Calu3 (cell line): ENCODE measurements at regions of chr4 and their contacts with region 1.

Region 1: DNA sequence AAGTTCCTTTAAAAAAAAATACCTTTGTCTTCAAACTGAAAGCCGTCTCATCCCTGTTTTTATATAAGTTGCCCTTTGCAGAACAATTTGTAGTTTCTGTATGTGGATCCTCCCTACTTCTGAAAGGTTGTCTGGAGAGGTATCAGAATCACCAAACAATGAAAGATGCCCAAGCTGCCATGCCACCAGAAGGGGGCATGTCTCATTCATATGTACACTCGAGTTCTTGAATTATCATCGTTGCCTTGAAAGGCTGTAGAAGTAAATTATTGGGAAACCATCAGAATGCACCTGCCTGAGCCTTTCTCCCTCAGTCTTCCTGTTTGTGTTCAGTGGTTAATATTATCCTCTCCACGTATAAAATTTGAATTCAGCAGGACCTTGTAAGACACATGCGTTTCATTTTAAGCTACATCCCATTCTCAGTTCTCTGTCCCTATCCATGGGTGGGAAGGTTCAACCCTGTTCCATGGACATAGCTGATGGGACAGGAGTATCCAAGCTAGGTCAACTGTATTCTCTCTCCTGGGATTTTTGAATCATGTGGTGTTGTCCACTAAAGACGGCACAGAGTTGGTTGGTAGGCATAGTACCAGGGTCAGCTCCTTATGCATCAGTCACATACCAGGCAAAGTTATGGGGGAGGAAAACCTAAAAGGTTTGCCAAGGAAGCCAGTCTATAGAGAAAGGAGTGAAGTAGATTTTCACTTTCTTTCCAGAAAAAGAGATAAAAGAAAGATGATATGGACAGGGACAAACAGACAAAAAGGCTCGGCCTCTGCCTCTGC is 24.0 kb downstream of the GALNT7 start:
- DNase-seq: no peak
- H3K4me3 Mint-ChIP-seq: peak overlapping the region; percentile 49
- H3K27ac Mint-ChIP-seq: peak overlapping the region; percentile 95
- H3K4me1 Mint-ChIP-seq: peaks cover 52% of the 10 kb centered on the region
- H3K27me3 Mint-ChIP-seq: no peaks in the 10 kb centered on the region
- CTCF ChIP-seq: no peak

Region 2: DNA sequence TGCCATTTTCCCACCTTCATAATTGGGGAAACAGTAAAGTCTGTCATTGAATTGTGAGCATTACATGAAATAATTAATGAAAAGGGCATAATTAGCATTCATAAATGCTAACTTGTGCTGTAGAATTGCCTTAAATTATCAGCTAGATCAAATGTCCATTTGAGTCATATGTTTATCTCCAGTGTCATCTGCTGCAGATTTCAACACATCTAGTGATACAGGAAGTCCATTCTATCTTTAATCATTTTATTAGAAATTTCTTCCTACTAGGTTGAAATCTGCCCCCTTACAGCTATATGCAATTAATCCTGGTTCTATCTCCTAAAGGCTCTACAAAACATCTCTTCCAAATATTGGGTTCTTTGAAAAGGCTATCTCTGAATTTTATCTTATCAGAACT is 264.2 kb before region 1 on chr4:
- CTCF ChIA-PET with region 1: no interaction called
- intact Hi-C with region 1: no loop called
- DNase-seq: no peak
- H3K4me3 Mint-ChIP-seq: no peak overlapping the region
- H3K27ac Mint-ChIP-seq: no peak overlapping the region
- H3K4me1 Mint-ChIP-seq: no peaks in the 10 kb centered on the region
- H3K27me3 Mint-ChIP-seq: no peaks in the 10 kb centered on the region
- CTCF ChIP-seq: no peak

Region 3: GRCh38 chr4:173057901-173058300 is 134.7 kb before region 1 on chr4:
- CTCF ChIA-PET with region 1: interaction called, 16 read pairs
- intact Hi-C with region 1: no loop called
- DNase-seq: no peak
- H3K4me3 Mint-ChIP-seq: no peak overlapping the region
- H3K27ac Mint-ChIP-seq: no peak overlapping the region
- H3K4me1 Mint-ChIP-seq: peaks cover 8% of the 10 kb centered on the region
- H3K27me3 Mint-ChIP-seq: no peaks in the 10 kb centered on the region
- CTCF ChIP-seq: no peak

Region 4: DNA sequence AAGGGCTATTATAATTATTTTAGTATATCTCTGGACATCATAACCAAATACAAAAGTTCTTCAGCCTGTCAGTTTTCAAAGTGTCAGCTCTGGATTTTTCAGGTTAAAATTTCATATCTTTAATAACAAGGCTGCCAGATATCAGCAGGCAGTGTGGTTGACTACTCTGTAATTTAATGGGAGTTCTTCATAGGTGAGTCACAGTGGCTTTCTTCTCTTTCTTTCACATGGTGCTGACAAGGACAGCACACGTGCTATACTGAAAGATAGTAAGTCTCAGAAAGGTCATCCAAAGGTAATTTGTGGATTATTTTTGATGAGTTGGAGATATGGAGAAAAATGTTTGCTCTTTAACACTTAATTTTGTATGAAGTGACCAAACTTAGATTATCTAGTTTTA is 19.3 kb after region 1 on chr4:
- CTCF ChIA-PET with region 1: no interaction called
- intact Hi-C with region 1: loop called (anchors 2 kb)
- DNase-seq: no peak
- H3K4me3 Mint-ChIP-seq: no peak overlapping the region
- H3K27ac Mint-ChIP-seq: peak overlapping the region; percentile 87
- H3K4me1 Mint-ChIP-seq: peaks cover 20% of the 10 kb centered on the region
- H3K27me3 Mint-ChIP-seq: no peaks in the 10 kb centered on the region
- CTCF ChIP-seq: no peak

Region 5: DNA sequence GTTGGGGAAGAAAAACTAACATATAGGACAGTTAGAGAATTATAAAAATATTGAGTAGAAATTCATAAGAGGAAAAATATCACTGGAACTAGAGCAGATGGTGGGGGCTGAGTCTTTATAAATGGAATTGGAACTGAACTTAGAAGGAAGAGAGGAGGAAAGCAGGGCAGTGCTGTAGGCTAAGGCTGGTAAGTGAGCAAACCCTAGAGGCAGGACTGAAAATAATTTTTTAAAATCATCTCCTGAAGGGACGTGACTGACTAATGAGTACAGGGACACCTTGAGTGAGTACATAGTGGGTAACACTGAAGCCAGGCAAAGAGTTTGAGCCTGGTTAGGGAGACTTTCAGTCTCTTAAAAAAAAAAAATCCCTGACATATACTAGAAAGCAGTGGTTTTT is 39.3 kb after region 1 on chr4:
- CTCF ChIA-PET with region 1: no interaction called
- intact Hi-C with region 1: no loop called
- DNase-seq: no peak
- H3K4me3 Mint-ChIP-seq: no peak overlapping the region
- H3K27ac Mint-ChIP-seq: no peak overlapping the region
- H3K4me1 Mint-ChIP-seq: peaks cover 8% of the 10 kb centered on the region
- H3K27me3 Mint-ChIP-seq: no peaks in the 10 kb centered on the region
- CTCF ChIP-seq: no peak

Region 6: GRCh38 chr4:173252024-173252935 is 59.7 kb after region 1 on chr4:
- CTCF ChIA-PET with region 1: no interaction called
- intact Hi-C with region 1: loop called (anchors 2 kb)
- DNase-seq: peak; percentile 76
- H3K4me3 Mint-ChIP-seq: no peak overlapping the region
- H3K27ac Mint-ChIP-seq: peak overlapping the region; percentile 40
- H3K4me1 Mint-ChIP-seq: peaks cover 27% of the 10 kb centered on the region
- H3K27me3 Mint-ChIP-seq: no peaks in the 10 kb centered on the region
- CTCF ChIP-seq: no peak

Region 7: GRCh38 chr4:173450281-173450680 is 257.7 kb after region 1 on chr4:
- CTCF ChIA-PET with region 1: no interaction called
- intact Hi-C with region 1: no loop called
- DNase-seq: no peak
- H3K4me3 Mint-ChIP-seq: no peak overlapping the region
- H3K27ac Mint-ChIP-seq: no peak overlapping the region
- H3K4me1 Mint-ChIP-seq: no peaks in the 10 kb centered on the region
- H3K27me3 Mint-ChIP-seq: no peaks in the 10 kb centered on the region
- CTCF ChIP-seq: no peak

Region 8: DNA sequence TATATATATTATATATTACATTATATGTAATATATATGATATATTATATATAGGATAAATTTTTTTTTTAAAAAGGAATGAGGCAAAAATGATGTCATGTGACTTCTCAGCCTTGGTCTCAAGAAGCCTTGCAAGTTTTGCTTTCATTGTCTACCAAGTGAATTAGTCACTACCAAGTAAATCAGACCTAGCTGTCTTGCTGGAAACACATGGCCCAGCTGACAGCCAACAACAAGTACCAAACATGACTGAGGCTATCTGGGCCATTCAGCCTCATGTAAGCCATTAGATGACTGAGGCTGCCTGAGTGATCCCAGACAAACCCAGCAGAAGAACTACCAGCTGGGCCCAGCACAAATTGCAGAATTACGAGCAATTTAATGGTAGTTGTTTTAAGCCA is 292.6 kb after region 1 on chr4:
- CTCF ChIA-PET with region 1: no interaction called
- intact Hi-C with region 1: no loop called
- DNase-seq: no peak
- H3K4me3 Mint-ChIP-seq: no peak overlapping the region
- H3K27ac Mint-ChIP-seq: no peak overlapping the region
- H3K4me1 Mint-ChIP-seq: no peaks in the 10 kb centered on the region
- H3K27me3 Mint-ChIP-seq: no peaks in the 10 kb centered on the region
- CTCF ChIP-seq: no peak